ENCODE measurements at regions of chr15 and their contacts with region 1.

Region 1: DNA sequence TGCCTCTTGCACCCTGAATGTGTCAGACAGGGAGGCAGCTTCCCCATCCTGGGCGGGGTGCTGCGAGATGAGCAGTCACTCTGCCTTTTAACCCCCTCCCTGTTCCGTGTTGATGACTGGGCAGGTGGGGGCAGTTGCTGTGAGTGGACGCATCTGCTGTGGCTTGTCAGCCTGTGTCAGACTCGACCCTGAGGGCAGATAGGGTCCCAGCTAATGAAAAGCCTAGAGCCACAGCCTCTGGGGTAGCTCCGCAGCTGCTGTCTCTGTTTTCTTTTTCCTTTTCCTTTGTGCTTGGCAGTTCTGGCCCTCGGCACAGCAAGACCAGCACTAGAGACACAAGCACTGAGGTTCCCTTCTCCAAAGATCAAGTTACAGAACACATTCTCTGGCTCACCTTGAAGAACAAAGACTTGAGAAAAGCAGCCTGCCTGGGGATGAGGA is 43.0 kb upstream of the GLCE start:
- DNase-seq: peak; percentile 16
- H3K4me3 Mint-ChIP-seq: no peak overlapping the region
- H3K27ac Mint-ChIP-seq: no peak overlapping the region
- H3K4me1 Mint-ChIP-seq: peaks cover 21% of the 10 kb centered on the region
- H3K27me3 Mint-ChIP-seq: no peaks in the 10 kb centered on the region
- CTCF ChIP-seq: no peak

Region 2: GRCh38 chr15:69090197-69090948 is 27.1 kb before region 1 on chr15:
- CTCF ChIA-PET with region 1: no interaction called
- POLR2A ChIA-PET with region 1: interaction called, 12 read pairs
- intact Hi-C with region 1: no loop called
- DNase-seq: peak; percentile 70
- H3K4me3 Mint-ChIP-seq: peak overlapping the region; percentile 4
- H3K27ac Mint-ChIP-seq: peak overlapping the region; percentile 53
- H3K4me1 Mint-ChIP-seq: peaks cover 67% of the 10 kb centered on the region
- H3K27me3 Mint-ChIP-seq: no peaks in the 10 kb centered on the region
- CTCF ChIP-seq: no peak

Measured in MCF 10A (cell line).